CD8-positive, alpha-beta memory T cell (primary cell): ENCODE measurements at regions of chr3 and their contacts with region 1.

Region 1: GRCh38 chr3:197256836-197257444 is 41.5 kb downstream of the DLG1 start:
- DNase-seq: peak in 4 of 5 donors; percentile 7 to 49 (median 34)
- H3K4me3 ChIP-seq: no peak overlapping the region
- H3K4me3 Mint-ChIP-seq: no peak overlapping the region
- H3K27ac ChIP-seq: no peak overlapping the region
- H3K27ac Mint-ChIP-seq: peak overlapping the region in 2 of 8 donors; percentile 32 to 61
- H3K4me1 ChIP-seq: peaks cover 26% of the 10 kb centered on the region
- H3K4me1 Mint-ChIP-seq: peaks cover 45 to 81% (median 76%) of the 10 kb centered on the region in 3 donors
- H3K27me3 ChIP-seq: no peaks in the 10 kb centered on the region
- H3K27me3 Mint-ChIP-seq: no peaks in the 10 kb centered on the region

Region 2: DNA sequence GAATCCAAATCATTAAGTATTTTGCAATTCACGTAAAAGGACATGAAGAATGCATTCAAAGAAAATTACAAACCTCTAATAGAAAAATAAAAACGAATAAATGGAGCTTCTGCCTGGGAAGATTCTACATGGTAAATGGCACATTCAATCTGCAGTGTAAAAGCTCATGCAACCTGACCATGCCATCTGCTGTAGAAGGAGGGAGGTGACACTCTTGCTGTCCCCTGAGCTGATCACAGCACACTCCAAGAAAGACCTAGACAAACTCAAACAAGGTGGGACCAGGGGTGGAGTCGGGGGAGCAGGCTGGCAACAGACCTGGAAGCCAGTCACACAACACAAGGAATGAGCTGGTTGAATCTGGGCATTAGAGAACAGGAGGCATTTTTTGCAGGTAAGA is 197.1 kb after region 1 on chr3:
- CTCF ChIA-PET with region 1: interaction called, 16 read pairs
- POLR2A ChIA-PET with region 1: no interaction called
- DNase-seq: peak in 1 of 5 donors; percentile 20
- H3K4me3 ChIP-seq: no peak overlapping the region
- H3K4me3 Mint-ChIP-seq: peak overlapping the region in 3 of 7 donors; percentile 3 to 70 (median 20)
- H3K27ac ChIP-seq: no peak overlapping the region
- H3K27ac Mint-ChIP-seq: peak overlapping the region in 3 of 8 donors; percentile 7 to 79 (median 20)
- H3K4me1 ChIP-seq: peaks cover 15% of the 10 kb centered on the region
- H3K4me1 Mint-ChIP-seq: peaks cover 13 to 28% (median 24%) of the 10 kb centered on the region in 3 donors
- H3K27me3 ChIP-seq: no peaks in the 10 kb centered on the region
- H3K27me3 Mint-ChIP-seq: peaks cover 0 to 14% of the 10 kb centered on the region in 2 donors

Region 3: DNA sequence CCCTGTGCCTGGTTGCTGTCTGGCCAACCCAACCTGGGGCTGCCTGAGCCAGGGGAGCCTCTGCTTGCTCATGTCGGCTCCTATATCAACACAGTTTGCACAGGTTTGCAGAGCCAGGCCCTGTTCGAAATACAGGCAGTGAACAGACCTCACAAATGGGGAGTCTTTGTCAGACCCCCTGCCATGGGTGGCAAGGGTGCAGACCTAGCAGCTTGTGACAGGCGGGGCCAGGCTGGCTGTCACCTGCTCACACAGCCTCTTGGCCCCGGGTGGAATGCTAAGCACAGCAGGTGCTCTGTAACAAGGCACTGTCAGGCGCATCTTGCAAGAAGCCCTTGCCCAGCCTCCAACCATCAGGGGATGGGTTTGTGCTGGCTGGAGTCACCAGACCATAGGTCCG is 251.5 kb after region 1 on chr3:
- CTCF ChIA-PET with region 1: interaction called, 16 read pairs
- POLR2A ChIA-PET with region 1: no interaction called
- DNase-seq: no peak
- H3K4me3 ChIP-seq: no peak overlapping the region
- H3K4me3 Mint-ChIP-seq: no peak overlapping the region
- H3K27ac ChIP-seq: no peak overlapping the region
- H3K27ac Mint-ChIP-seq: peak overlapping the region in 1 of 8 donors; percentile 32
- H3K4me1 ChIP-seq: peaks cover 7% of the 10 kb centered on the region
- H3K4me1 Mint-ChIP-seq: peaks cover 4 to 9% (median 4%) of the 10 kb centered on the region in 3 donors
- H3K27me3 ChIP-seq: no peaks in the 10 kb centered on the region
- H3K27me3 Mint-ChIP-seq: no peaks in the 10 kb centered on the region